ENCODE measurements at regions of chr7 and their contacts with region 1.

Region 1: DNA sequence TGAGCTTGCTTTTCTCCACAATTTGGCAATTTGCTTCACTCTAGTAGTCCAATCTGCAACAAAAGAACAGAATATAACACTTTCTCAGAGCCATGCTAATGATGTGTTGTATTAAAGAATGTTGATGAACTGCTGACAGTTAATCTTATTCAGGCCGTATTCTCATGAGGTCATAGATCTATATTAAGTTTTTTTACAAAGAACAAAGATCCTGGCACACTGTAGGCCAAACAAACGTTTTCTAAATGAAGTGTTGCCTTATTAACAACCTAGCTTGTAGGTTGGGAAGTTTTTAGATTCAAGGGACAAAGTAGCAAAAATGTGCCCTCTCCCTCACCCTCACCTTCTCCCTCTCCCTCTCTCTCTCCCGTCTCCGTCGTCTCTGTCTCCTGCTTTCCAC is 6.8 kb downstream of the HILPDA start:
- DNase-seq: no peak
- H3K4me3 ChIP-seq: no peak overlapping the region
- H3K27ac ChIP-seq: no peak overlapping the region
- H3K4me1 ChIP-seq: no peaks in the 10 kb centered on the region
- H3K27me3 ChIP-seq: no peaks in the 10 kb centered on the region
- CTCF ChIP-seq: no peak
- POLR2A ChIP-seq: no peak

Region 2: GRCh38 chr7:128030654-128031611 is 431.5 kb before region 1 on chr7 and contains the start of gene LRRC4:
- intact Hi-C with region 1: no loop called
- DNase-seq: peak; percentile 53 to 76 (median 66)
- H3K4me3 ChIP-seq: peak within 1 kb of the TSS in 2 of 4 donors; percentile 59 to 72
- H3K27ac ChIP-seq: peak within 1 kb of the TSS in 3 of 5 donors; percentile 72 to 79 (median 76)
- H3K4me1 ChIP-seq: peaks cover 15 to 57% of the 10 kb centered on the region in 2 donors
- H3K27me3 ChIP-seq: no peaks in the 10 kb centered on the region
- CTCF ChIP-seq: peak in 2 of 6 experiments; percentile 20 to 26
- POLR2A ChIP-seq: no peak
- total RNA-seq, gene LRRC4: 3.4 to 23.7 (median 10.1) TPM

Region 3: GRCh38 chr7:128121711-128122530 is 340.5 kb before region 1 on chr7:
- intact Hi-C with region 1: no loop called
- DNase-seq: peak in 1 of 7 donors; percentile 53
- H3K4me3 ChIP-seq: peak overlapping the region in 1 of 4 donors; percentile 38
- H3K27ac ChIP-seq: peak overlapping the region in 1 of 5 donors; percentile 40
- H3K4me1 ChIP-seq: no peaks in the 10 kb centered on the region
- H3K27me3 ChIP-seq: no peaks in the 10 kb centered on the region
- CTCF ChIP-seq: no peak
- POLR2A ChIP-seq: no peak

Region 4: DNA sequence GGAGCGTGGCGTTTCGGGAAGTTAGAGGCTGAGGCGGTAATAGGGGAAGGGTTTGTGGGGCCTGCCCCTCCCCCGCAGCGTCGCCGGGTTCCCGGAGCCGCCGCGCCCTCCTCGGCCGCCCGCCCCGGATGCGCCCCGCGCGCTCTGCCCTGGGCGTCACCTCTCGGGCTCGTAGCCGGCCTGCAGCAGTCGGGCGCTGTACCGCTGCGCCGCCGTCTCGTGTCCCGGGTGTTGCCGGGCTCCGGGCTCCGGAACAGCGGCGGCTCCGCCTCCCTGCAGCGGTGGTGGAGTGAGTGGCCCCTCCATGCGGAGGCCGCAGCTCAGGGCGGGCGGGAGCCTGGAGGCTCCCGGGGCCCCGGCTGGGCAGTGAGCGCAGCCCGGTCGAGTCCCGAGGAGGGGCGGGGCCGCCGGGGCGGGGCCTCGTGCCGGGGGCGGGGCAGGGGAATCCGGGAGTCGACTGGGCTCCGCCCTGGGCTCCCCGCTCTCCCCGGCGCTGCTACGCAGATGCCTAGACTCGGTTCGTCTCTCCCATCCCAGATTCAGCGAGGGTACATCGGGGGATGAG is 52.8 kb before region 1 on chr7 and contains the start of gene IMPDH1:
- intact Hi-C with region 1: loop called in 1 of 2 experiments (anchors 10 kb)
- DNase-seq: peak; percentile 80 to 92 (median 88)
- H3K4me3 ChIP-seq: peak within 1 kb of the TSS in 3 of 4 donors; percentile 35 to 83 (median 59)
- H3K27ac ChIP-seq: peak within 1 kb of the TSS; percentile 39 to 91 (median 76)
- H3K4me1 ChIP-seq: peaks cover 6 to 30% of the 10 kb centered on the region in 2 donors
- H3K27me3 ChIP-seq: no peaks in the 10 kb centered on the region
- CTCF ChIP-seq: peak in 1 of 6 experiments; percentile 3
- POLR2A ChIP-seq: peak in 1 of 2 donors; percentile 31
- total RNA-seq, gene IMPDH1: 22.0 to 52.4 (median 32.4) TPM

Region 5: DNA sequence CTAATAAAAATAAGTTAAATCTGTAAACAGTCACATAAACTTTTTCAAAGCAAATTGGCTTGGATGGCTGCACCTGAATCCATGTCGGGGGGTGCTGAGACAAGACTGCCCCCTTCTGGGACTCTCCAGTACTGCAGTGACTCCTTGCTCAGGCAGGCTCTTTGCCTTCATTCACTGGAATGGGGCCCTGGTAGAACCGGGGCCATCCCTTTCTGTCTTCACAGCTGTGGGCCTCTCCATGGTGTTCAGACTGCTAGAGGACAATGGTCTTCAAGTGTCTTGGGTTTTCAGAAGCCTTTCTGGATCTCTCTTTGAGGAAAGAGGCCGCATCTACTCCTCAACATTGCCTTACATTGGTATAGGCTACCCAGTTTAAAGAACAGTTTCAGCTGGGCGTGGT is 36.6 kb before region 1 on chr7:
- intact Hi-C with region 1: loop called (anchors 2 to 5 kb)
- DNase-seq: peak; percentile 66 to 88 (median 75)
- H3K4me3 ChIP-seq: no peak overlapping the region
- H3K27ac ChIP-seq: no peak overlapping the region
- H3K4me1 ChIP-seq: no peaks in the 10 kb centered on the region
- H3K27me3 ChIP-seq: no peaks in the 10 kb centered on the region
- CTCF ChIP-seq: peak; percentile 79 to 91 (median 84)
- POLR2A ChIP-seq: no peak